ENCODE measurements at regions of chr2 and their contacts with region 1.

Region 1: GRCh38 chr2:190088917-190089316 is 26.4 kb upstream of the MSTN start:
- DNase-seq: peak; percentile 43
- H3K4me3 ChIP-seq: peak overlapping the region in 1 of 2 experiments; percentile 22; a peak in 1 of 4 replicates
- H3K27ac ChIP-seq: no peak overlapping the region
- H3K4me1 ChIP-seq: peaks cover 0 to 3% of the 10 kb centered on the region in 2 experiments; a peak in 2 of 4 replicates
- H3K27me3 ChIP-seq: no peaks in the 10 kb centered on the region
- CTCF ChIP-seq: peak; percentile 84
- EP300 ChIP-seq: no peak
- RAD21 ChIP-seq: peak; percentile 93

Region 2: DNA sequence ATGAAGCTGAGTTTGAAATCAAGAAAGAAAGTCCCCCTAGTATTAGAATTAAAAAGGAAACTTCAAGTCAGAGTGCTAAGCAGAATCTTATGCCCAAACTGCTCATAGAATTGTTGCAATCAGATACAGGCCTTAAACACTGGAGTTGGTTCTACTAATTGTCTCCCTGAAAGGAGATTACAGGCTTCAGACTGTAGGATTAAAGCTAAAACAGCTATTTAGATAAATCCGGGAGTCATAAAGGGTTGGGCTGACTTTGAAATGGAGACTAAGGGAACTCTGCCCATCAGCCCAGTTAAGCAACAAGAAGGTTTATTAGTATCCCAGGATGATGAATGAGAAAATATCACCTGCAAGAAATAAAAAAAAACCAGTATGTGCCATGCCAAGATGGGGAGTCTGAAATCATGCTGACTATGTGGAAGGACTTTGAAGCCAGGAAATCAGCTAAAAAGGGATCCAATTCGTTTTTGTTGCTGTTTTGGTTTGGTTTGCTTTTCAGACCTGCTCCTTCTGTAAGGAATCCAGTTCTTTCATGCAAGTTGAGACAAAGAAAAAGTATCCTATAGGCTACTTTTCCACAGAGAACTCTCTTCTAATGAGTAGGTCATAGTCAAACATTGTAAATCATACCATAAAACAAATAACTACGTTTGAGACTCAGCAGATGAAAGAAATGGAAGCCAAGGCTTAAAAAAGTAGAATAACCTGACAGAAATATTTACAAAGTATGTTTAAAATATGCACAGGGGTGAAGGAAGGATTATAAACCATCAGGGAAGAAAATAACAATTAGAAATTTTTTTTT is 11.2 kb after region 1 on chr2:
- CTCF ChIA-PET with region 1: interaction called, 18 read pairs
- POLR2A ChIA-PET with region 1: no interaction called
- DNase-seq: no peak
- H3K4me3 ChIP-seq: no peak overlapping the region
- H3K27ac ChIP-seq: no peak overlapping the region
- H3K4me1 ChIP-seq: no peaks in the 10 kb centered on the region
- H3K27me3 ChIP-seq: no peaks in the 10 kb centered on the region
- CTCF ChIP-seq: no peak
- EP300 ChIP-seq: no peak
- RAD21 ChIP-seq: no peak

Region 3: GRCh38 chr2:190121971-190122370 is 33.1 kb after region 1 on chr2:
- CTCF ChIA-PET with region 1: interaction called, 38 read pairs
- POLR2A ChIA-PET with region 1: no interaction called
- DNase-seq: peak; percentile 30
- H3K4me3 ChIP-seq: no peak overlapping the region
- H3K27ac ChIP-seq: no peak overlapping the region
- H3K4me1 ChIP-seq: no peaks in the 10 kb centered on the region; a peak in 1 of 4 replicates
- H3K27me3 ChIP-seq: no peaks in the 10 kb centered on the region
- CTCF ChIP-seq: peak; percentile 50
- EP300 ChIP-seq: no peak
- RAD21 ChIP-seq: peak; percentile 63

Region 4: DNA sequence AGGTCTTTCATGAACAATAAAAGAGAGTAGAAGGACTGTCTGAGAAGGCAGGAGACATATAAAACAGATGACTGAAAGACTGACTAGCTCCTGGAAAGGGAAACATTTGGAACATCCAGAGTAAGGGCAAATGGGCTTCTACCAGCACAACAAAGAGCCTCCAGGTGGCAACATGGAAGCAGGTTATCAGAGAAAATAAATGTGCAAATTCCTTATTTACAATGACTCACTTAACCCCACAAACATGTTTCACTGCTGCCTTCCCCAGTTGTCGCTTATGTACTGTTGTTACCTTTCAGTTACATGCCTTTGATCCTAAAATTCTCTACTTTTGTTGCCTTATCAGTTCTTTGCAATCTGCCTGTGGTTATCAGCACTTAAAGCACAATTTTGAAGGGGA is 113.7 kb after region 1 on chr2:
- CTCF ChIA-PET with region 1: no interaction called
- POLR2A ChIA-PET with region 1: no interaction called
- DNase-seq: no peak
- H3K4me3 ChIP-seq: no peak overlapping the region
- H3K27ac ChIP-seq: no peak overlapping the region
- H3K4me1 ChIP-seq: no peaks in the 10 kb centered on the region
- H3K27me3 ChIP-seq: no peaks in the 10 kb centered on the region
- CTCF ChIP-seq: no peak
- EP300 ChIP-seq: no peak
- RAD21 ChIP-seq: no peak

Region 5: DNA sequence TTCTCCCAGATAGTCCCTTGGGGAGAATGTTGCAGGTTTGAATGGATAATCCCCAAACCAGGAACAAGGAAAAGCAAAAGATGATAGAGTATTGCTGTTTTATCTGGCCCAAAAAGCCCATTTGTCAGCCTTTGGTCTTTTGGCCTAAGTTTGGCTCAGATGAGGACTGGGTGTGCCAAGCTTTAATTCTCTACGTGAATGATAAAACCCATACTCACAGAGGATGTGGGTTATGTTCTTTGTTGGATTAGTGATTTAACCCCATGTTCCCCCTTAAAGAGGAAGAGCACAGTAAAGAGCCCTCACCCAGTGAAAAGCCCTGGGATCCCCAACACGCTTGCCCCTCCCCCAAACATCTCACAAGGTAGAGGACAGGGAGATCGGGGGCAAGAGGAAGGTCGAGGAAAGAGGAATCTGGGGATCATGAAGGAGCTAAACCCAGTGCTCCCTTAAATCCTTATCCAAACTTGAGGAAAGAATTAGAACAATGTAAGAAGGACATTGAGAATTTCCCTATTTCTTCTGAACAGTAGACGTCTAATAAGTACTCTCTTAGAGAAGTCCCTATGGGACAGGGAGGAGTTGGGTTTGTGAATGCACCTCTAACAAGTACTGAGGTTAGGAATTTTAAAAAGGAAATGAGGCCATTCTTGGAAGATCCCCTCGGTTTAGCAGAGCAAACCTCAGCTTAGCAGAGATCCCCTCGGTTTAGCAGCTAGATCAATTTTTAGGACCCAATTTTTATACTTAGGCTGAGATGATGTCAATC is 125.7 kb after region 1 on chr2:
- CTCF ChIA-PET with region 1: no interaction called
- POLR2A ChIA-PET with region 1: no interaction called
- DNase-seq: no peak
- H3K4me3 ChIP-seq: no peak overlapping the region
- H3K27ac ChIP-seq: no peak overlapping the region
- H3K4me1 ChIP-seq: peaks cover 0 to 15% of the 10 kb centered on the region in 2 experiments; a peak in 1 of 4 replicates
- H3K27me3 ChIP-seq: no peaks in the 10 kb centered on the region
- CTCF ChIP-seq: no peak
- EP300 ChIP-seq: no peak
- RAD21 ChIP-seq: no peak

Region 6: DNA sequence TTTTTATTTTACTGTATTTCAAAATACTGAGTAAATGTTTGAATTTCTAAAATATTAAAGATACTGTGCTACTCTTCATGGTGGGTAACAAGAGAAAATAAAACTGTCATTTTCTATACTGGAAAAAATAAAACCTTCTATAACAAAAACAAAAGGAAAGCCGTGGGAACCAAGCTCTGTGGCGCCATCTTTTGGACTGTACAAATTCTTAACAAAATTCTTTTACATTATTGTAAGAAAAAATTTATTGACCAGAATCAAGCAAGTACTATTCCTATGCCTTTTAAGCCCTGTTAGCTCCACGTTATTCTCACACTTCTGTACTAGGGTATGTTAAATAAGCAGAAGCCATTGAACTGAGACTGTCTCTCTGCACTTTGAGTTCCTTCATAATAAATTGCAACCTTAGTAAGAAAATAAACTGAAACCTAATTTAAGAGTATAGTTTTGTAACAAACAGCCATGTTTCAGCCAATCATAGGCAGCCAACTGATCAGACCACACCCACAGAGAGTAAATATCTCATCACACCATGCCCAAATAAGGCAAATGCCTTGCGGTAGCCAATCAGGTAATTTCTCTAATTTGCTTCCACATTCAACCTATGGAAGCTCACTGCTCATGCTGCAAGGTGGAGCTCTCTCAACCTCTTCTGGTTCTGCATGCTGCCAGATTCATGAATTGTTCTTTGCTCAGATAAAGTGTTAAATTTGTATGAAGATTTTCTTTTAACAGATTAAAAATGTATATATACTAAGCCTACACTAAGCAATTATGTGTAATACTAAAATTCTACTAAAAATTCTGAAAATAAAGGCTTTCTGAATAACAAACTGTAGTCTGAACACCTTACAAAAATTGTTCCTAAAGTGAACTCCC is 188.6 kb after region 1 on chr2:
- CTCF ChIA-PET with region 1: interaction called, 30 read pairs
- POLR2A ChIA-PET with region 1: no interaction called
- DNase-seq: peak; percentile 6
- H3K4me3 ChIP-seq: no peak overlapping the region
- H3K27ac ChIP-seq: no peak overlapping the region
- H3K4me1 ChIP-seq: no peaks in the 10 kb centered on the region
- H3K27me3 ChIP-seq: no peaks in the 10 kb centered on the region
- CTCF ChIP-seq: peak; percentile 69
- EP300 ChIP-seq: no peak
- RAD21 ChIP-seq: peak; percentile 67

Region 7: DNA sequence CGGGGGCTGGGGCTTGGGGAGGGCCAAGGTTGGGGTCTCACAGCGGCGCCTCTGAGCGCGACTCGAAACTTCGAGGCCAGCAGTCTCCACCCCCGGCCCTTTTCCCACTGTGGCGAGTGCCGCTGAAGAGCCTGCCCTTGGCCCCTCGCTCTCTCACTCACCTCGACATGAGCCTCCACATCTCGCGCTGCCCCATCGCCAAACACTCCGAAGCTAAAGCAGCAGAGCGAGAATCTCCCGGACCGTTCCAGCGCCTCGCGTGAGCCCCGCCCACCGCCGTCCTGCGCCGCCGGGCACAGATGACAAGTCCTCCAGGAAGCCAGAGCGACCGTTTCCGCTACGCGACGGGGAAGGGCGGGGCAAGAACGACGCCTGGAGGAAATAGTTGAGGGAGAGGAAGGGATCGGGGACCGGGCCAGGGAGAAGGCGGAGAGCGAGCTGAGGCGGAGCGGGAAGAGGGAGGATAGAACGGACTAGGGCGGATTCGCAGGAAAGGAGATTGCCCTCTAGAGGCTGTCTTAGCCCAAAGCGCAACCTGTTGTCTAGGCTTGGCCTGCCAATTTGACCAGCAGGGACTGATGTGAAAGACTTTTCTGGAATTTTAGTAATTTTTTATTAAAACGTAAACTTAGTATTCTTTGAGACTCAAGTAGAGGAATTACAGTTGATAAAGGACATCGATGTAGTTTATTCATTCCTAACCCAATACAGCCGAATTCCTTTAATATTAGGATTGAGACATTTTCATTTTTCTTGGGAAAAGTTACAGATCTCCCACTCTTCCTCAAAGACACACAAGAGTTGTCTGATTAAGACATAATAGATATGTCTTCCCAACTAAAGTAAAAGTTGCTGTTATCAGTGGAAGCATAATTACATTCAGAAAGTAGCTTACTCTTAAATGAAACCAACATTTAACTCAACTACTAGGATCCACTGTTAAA is 230.9 kb after region 1 on chr2 and contains the start of gene HIBCH:
- CTCF ChIA-PET with region 1: interaction called, 10 read pairs
- POLR2A ChIA-PET with region 1: no interaction called
- DNase-seq: peak; percentile 90
- H3K4me3 ChIP-seq: peak within 1 kb of the TSS; percentile 80 to 82
- H3K27ac ChIP-seq: peak within 1 kb of the TSS; percentile 55 to 86
- H3K4me1 ChIP-seq: peaks cover 0 to 7% of the 10 kb centered on the region in 2 experiments; a peak in 2 of 4 replicates
- H3K27me3 ChIP-seq: no peaks in the 10 kb centered on the region
- CTCF ChIP-seq: peak; percentile 87
- EP300 ChIP-seq: peak in 1 of 2 experiments; percentile 56; a peak in 2 of 4 replicates
- RAD21 ChIP-seq: peak; percentile 42
- polyA plus RNA-seq, gene HIBCH: 8.4 and 12.2 TPM in 2 replicates